ENCODE measurements at regions of chr2 and their contacts with region 1.

Region 1: DNA sequence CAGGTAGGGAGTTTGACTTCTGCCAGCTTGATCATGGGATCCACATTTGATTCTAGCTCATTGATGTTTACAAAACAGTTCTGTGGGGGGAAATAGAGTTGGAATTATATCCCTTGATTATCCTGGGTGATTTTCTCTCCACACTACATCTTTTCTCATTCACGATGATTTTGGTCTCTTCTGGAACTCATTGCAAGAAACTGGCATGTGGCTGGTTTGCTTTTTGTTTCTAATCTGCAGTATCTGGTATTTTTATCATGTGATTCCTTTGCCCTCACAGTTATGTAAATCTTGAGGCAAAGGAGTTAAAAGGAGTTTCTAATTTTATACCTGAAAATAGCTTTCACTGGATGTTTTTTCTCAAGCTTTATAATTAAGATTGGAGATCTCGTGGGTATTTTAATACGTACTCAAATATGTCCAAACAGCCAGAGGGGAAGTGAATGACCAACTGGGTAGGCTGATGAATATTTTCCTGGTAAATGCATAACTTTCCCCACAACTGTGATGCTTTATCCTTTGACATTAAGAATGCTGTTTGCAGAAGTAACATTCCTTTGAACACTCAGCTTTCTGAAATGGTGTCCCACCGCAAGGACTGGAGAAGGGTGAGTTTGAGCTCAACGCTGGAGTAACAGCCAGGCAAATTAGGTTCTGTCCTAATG is 502.9 kb upstream of the ZEB2 start:
- DNase-seq: no peak
- H3K4me3 ChIP-seq: no peak overlapping the region
- H3K27ac ChIP-seq: peak overlapping the region in 26 of 59 donors; percentile 0 to 67 (median 23)
- H3K27me3 ChIP-seq: no peaks in the 10 kb centered on the region
- CTCF ChIP-seq: no peak

Region 2: GRCh38 chr2:144770616-144771230 is 252.1 kb before region 1 on chr2:
- intact Hi-C with region 1: loop called in 1 of 2 experiments (anchors 10 kb)
- DNase-seq: no peak
- H3K4me3 ChIP-seq: peak overlapping the region in 46 of 59 donors; percentile 2 to 55 (median 28)
- H3K27ac ChIP-seq: peak overlapping the region in 5 of 59 donors; percentile 2 to 31 (median 21)
- H3K27me3 ChIP-seq: peaks cover 0 to 6% (median 0%) of the 10 kb centered on the region in 45 donors
- CTCF ChIP-seq: no peak

Region 3: GRCh38 chr2:144959416-144959815 is 63.4 kb before region 1 on chr2:
- intact Hi-C with region 1: no loop called
- DNase-seq: no peak
- H3K4me3 ChIP-seq: no peak overlapping the region
- H3K27ac ChIP-seq: no peak overlapping the region
- H3K27me3 ChIP-seq: no peaks in the 10 kb centered on the region
- CTCF ChIP-seq: no peak

Region 4: DNA sequence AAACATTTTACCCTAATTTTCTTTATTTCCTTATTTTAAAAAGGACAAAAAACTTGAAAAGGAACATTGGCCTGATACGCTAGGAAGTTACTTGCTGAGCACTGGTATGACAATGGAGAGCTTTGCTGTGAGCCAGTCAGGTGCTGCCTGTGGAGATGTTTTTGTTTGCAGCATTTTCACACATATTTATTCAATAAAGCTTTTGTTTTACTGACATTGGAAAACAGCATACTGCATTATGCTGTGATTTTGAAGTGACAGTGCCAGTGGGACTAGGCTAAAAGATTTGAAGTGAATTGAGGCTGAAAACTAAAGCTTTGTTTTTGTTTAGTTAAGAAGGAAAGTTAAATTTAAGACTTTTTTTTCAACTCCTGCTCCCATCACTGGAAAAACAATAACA is 32.1 kb before region 1 on chr2:
- intact Hi-C with region 1: loop called in 1 of 2 experiments (anchors 5 kb)
- DNase-seq: peak in 2 of 10 donors; percentile 58 to 62
- H3K4me3 ChIP-seq: peak overlapping the region in 2 of 59 donors; percentile 4 to 24
- H3K27ac ChIP-seq: peak overlapping the region in 57 of 59 donors; percentile 10 to 90 (median 78)
- H3K27me3 ChIP-seq: no peaks in the 10 kb centered on the region
- CTCF ChIP-seq: peak in 1 of 56 donors; percentile 14

Region 5: GRCh38 chr2:145141981-145142380 is 119.2 kb after region 1 on chr2:
- intact Hi-C with region 1: no loop called
- DNase-seq: no peak
- H3K4me3 ChIP-seq: no peak overlapping the region
- H3K27ac ChIP-seq: no peak overlapping the region
- H3K27me3 ChIP-seq: no peaks in the 10 kb centered on the region
- CTCF ChIP-seq: no peak

Measured in dorsolateral prefrontal cortex (tissue), 120 donors.